ENCODE measurements at regions of chr6 and their contacts with region 1.

Region 1: DNA sequence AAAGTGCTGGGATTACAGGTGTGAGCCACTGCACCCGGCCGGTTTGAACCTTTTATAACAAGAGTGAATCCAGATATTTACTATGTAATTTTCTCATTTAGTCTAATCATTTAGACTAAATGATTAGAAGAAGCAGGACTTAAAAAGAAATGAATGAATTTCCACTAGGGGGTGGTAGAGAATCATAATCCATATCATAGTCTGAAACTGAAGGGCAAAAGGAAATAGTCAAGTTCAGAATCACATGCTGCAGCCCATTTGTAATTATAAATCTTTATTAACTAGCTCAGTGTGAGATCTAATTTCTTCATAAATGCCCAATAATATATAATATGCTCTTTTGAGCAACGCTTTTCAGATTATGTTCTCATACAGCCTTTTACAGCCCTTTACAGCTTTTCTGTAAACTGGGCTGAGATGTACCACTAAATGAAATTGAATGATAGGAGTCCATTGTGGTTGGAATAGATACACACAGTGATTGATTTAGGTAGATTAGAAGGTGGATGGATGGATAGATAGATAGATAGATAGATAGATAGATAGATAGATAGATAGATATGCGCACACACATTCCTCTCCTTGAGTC is 31.8 kb downstream of the PSMB9 start:
- DNase-seq: peak in 2 of 9 experiments; percentile 78 to 85
- ATAC-seq: peak; percentile 71
- H3K4me3 ChIP-seq: no peak overlapping the region
- H3K4me3 Mint-ChIP-seq: no peak overlapping the region
- H3K27ac ChIP-seq: no peak overlapping the region
- H3K27ac Mint-ChIP-seq: no peak overlapping the region
- H3K4me1 ChIP-seq: no peaks in the 10 kb centered on the region
- H3K4me1 Mint-ChIP-seq: no peaks in the 10 kb centered on the region
- H3K27me3 ChIP-seq: no peaks in the 10 kb centered on the region
- H3K27me3 Mint-ChIP-seq: no peaks in the 10 kb centered on the region
- CTCF ChIP-seq: peak; percentile 77

Region 2: DNA sequence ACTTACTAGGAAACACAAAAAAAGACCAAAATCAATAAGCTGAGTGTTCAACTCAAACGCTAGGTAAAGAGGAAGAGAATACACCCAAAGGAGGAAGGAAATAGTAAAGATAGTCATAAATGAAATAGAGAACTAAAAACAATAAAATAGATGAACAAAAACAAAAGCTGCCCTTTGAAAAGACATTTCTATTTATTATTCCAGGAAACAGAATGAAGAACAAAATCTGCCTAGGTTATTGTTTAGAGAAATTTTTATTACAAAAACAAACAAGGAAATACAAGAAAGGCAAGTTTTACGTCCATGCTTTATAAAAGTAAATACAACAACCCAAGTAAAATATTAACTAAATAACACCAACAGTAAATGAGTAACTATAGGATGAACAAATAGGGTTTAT is 34.9 kb after region 1 on chr6:
- CTCF ChIA-PET with region 1: interaction called, 12 read pairs
- POLR2A ChIA-PET with region 1: no interaction called
- intact Hi-C with region 1: no loop called
- DNase-seq: no peak
- ATAC-seq: no peak
- H3K4me3 ChIP-seq: no peak overlapping the region
- H3K4me3 Mint-ChIP-seq: no peak overlapping the region
- H3K27ac ChIP-seq: no peak overlapping the region
- H3K27ac Mint-ChIP-seq: no peak overlapping the region
- H3K4me1 ChIP-seq: no peaks in the 10 kb centered on the region
- H3K4me1 Mint-ChIP-seq: no peaks in the 10 kb centered on the region
- H3K27me3 ChIP-seq: peaks cover 0 to 3% of the 10 kb centered on the region in 2 experiments
- H3K27me3 Mint-ChIP-seq: peaks cover 6% of the 10 kb centered on the region
- CTCF ChIP-seq: no peak

Region 3: DNA sequence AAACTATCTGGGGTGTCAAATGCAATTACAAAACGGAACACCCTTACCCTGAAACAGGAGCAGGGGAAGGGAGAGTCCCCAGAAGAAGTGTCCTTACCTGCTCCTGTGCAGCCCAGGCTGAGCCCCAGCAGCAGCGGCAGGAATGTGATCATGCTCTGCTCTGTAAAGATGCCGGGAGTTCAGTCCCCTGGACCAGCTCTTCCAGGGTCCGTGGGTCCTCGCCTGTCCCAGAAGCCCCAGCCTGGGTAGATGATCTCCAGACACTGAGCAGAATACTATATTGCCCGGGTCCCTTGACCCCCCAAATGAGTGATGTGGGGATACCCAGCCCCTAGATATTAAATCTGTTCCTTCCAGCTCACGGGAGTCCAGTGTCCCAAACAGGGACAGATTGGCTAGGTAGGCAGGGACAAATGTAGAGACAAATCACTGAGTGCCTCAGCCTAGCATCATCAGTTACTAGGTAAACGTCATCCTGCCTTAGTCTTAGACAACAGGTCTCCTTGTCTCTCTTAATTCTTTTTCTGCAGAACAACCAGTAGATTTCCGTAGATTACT is 54.9 kb after region 1 on chr6 and contains the start of gene HLA-DMB:
- CTCF ChIA-PET with region 1: interaction called, 26 read pairs
- POLR2A ChIA-PET with region 1: interaction called, 3 read pairs
- intact Hi-C with region 1: no loop called
- DNase-seq: peak in 7 of 9 experiments; percentile 18 to 91 (median 51)
- ATAC-seq: peak; percentile 78
- H3K4me3 ChIP-seq: peak within 1 kb of the TSS; percentile 64 to 79
- H3K4me3 Mint-ChIP-seq: peak within 1 kb of the TSS; percentile 94
- H3K27ac ChIP-seq: peak within 1 kb of the TSS; percentile 72 to 91
- H3K27ac Mint-ChIP-seq: peak within 1 kb of the TSS; percentile 97
- H3K4me1 ChIP-seq: peaks cover 61% of the 10 kb centered on the region
- H3K4me1 Mint-ChIP-seq: peaks cover 62% of the 10 kb centered on the region
- H3K27me3 ChIP-seq: no peaks in the 10 kb centered on the region
- H3K27me3 Mint-ChIP-seq: no peaks in the 10 kb centered on the region
- CTCF ChIP-seq: no peak
- total RNA-seq, gene HLA-DMB: 8.9 to 9.9 TPM

Region 4: DNA sequence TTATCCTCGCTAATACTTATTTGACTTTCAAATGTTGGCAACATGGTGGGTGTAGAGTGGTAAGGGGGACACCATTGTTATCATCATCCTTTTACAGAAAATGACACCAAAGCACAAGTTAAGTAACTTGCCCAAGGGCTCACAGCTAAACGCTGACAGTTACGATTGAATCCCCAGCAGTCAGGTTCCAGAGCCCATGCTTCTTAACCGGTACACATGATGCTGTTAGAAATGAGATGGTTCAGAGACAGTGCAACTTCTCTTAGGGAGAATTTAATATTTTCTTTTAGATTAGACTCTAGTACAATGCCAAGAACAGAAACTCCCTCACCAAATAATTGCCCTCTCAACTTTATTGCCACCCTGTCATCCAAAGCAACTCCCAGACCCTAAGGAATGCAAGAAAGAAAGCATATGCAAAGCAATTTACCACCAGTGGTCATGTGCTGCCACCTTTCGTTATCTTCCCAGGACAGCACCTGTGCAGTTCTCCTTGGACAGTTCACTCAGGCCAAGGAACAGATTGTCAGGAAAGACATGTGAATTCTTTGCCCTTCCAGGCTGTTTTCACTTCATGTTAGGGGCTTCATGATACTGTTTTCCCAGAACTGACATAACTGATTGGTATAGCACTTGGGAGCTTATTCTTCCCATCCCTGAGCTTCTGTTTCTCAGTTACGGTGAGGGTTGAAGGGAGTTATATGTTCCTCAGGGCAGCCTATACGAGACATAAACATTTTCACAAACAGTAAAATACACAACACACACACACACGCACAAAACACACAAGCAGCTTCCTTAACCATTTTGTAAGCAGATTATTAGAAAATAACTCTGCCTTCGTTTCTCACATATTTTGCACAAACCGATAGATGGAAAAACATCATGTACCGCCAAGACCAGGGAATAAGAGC is 62.0 kb after region 1 on chr6:
- CTCF ChIA-PET with region 1: interaction called, 126 read pairs
- POLR2A ChIA-PET with region 1: interaction called, 9 read pairs
- intact Hi-C with region 1: loop called (anchors 1 to 2 kb)
- DNase-seq: peak in 6 of 9 experiments; percentile 30 to 75 (median 56)
- ATAC-seq: no peak
- H3K4me3 ChIP-seq: no peak overlapping the region
- H3K4me3 Mint-ChIP-seq: no peak overlapping the region
- H3K27ac ChIP-seq: no peak overlapping the region
- H3K27ac Mint-ChIP-seq: no peak overlapping the region
- H3K4me1 ChIP-seq: peaks cover 49% of the 10 kb centered on the region
- H3K4me1 Mint-ChIP-seq: peaks cover 59% of the 10 kb centered on the region
- H3K27me3 ChIP-seq: no peaks in the 10 kb centered on the region
- H3K27me3 Mint-ChIP-seq: no peaks in the 10 kb centered on the region
- CTCF ChIP-seq: peak; percentile 62

Region 5: GRCh38 chr6:33091957-33092356 is 206.2 kb after region 1 on chr6:
- CTCF ChIA-PET with region 1: no interaction called
- POLR2A ChIA-PET with region 1: no interaction called
- intact Hi-C with region 1: loop called in 1 of 2 experiments (anchors 10 kb)
- DNase-seq: peak; percentile 40 to 79 (median 67)
- ATAC-seq: peak; percentile 86
- H3K4me3 ChIP-seq: no peak overlapping the region
- H3K4me3 Mint-ChIP-seq: no peak overlapping the region
- H3K27ac ChIP-seq: no peak overlapping the region
- H3K27ac Mint-ChIP-seq: no peak overlapping the region
- H3K4me1 ChIP-seq: peaks cover 7% of the 10 kb centered on the region
- H3K4me1 Mint-ChIP-seq: peaks cover 3% of the 10 kb centered on the region
- H3K27me3 ChIP-seq: no peaks in the 10 kb centered on the region
- H3K27me3 Mint-ChIP-seq: peaks cover 13% of the 10 kb centered on the region
- CTCF ChIP-seq: peak; percentile 65